ENCODE measurements at regions of chrX and their contacts with region 1.

Region 1: DNA sequence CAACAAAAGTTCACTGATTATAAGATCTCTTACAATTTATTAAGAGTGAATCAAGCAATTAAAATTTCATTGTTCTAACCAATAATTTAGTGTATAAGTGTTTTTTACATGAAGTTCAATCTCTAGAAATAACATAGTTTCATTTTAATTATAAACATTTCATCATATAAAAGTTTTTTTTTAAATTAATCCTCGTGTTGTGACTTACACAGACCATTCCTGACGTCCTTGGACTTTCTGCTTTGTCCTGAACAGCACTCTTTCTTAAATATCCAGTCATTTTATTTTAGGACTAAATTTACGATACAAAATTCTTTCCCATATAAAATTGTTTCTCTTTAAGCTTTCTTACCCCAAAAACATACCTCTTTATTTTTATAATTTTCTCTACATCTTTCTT is 841.7 kb upstream of the POU3F4 start:
- DNase-seq: no peak
- ATAC-seq: no peak
- H3K4me3 ChIP-seq: no peak overlapping the region
- H3K27ac ChIP-seq: no peak overlapping the region
- H3K4me1 ChIP-seq: no peaks in the 10 kb centered on the region
- H3K27me3 ChIP-seq: no peaks in the 10 kb centered on the region
- CTCF ChIP-seq: no peak
- EP300 ChIP-seq: no peak
- POLR2A ChIP-seq: no peak
- RAD21 ChIP-seq: no peak

Region 2: DNA sequence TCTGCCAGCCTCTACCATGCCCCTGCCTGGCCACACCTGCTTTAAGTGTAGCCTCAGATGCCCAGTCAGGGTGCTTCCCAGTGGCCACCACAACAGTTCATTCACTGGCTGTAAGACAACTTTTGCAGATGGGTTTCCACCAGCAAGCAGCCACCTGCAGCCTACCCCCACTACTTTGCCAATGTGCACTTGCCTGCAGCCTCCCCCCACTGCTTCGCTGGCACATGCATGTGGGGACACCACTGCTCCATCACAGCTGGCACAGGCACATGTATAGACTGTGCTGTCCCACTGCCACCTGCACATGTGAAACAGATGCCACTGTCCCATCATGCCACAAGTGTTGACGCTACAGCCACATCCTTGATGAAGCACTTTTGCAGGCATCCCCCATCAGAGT is 740.5 kb before region 1 on chrX:
- CTCF ChIA-PET with region 1: no interaction called
- POLR2A ChIA-PET with region 1: no interaction called
- in situ Hi-C with region 1: no loop called
- intact Hi-C with region 1: loop called (anchors 5 kb)
- DNase-seq: no peak
- ATAC-seq: no peak
- H3K4me3 ChIP-seq: no peak overlapping the region
- H3K27ac ChIP-seq: no peak overlapping the region
- H3K4me1 ChIP-seq: no peaks in the 10 kb centered on the region
- H3K27me3 ChIP-seq: no peaks in the 10 kb centered on the region
- CTCF ChIP-seq: no peak
- EP300 ChIP-seq: no peak
- POLR2A ChIP-seq: no peak
- RAD21 ChIP-seq: no peak